Spleen (tissue), 13 donors: ENCODE measurements at regions of chr17 and their contacts with region 1.

Region 1: GRCh38 chr17:69123626-69124025 is 18.1 kb downstream of the ABCA6 start:
- DNase-seq: no peak
- H3K4me3 ChIP-seq: no peak overlapping the region
- H3K27ac ChIP-seq: no peak overlapping the region
- H3K4me1 ChIP-seq: peaks cover 0 to under 1% (median 0%) of the 10 kb centered on the region in 6 donors
- H3K27me3 ChIP-seq: no peaks in the 10 kb centered on the region
- CTCF ChIP-seq: no peak
- POLR2A ChIP-seq: no peak

Region 2: DNA sequence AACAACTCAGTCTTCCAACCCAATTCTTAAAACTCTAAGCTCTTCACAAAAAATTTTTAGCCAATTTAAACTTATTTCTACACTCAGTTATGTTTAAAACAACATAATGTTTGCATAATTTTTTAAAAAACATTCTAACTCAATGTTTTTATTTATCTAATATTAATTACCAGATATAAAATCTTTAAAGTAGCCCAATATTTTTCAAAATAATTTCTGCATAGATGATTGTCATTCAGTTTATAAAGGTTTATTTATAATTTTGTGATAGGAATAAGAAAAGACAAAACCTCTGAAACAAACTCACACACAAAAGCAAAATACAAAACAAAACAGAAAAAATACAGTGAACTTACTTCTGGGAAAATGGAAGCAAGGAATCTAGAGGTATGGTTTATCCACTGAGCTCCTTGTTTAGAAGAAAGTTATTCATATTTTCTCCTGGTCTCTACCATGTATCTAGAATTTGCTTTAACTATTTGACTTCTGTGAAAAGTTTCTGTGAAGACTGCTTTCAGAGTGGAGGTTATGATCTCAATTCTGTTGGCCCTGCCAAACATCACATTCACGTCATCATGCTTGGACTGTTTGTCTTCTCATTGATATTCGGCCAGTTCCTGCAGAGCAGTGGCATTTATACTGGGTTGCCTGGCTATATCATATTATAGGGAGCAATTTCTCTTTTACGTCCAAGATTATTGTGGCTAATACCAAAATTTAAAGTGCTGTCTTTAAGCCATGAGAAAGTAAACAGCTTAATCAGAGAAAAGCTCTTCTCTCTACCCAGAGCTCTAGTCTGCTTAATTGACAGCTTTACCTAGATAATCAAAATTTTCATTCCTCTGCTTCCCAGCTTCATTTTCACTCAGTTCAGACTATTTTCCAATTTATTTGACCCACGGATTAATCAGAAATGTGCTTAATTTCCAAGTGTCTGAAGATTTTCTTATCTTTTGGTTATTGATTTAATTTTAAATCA is 168.5 kb before region 1 on chr17 and contains the start of gene ABCA8:
- intact Hi-C with region 1: loop called (anchors 5 kb)
- DNase-seq: no peak
- H3K4me3 ChIP-seq: peak within 1 kb of the TSS in 5 of 8 donors; percentile 18 to 57 (median 33)
- H3K27ac ChIP-seq: peak within 1 kb of the TSS in 6 of 8 donors; percentile 16 to 62 (median 38)
- H3K4me1 ChIP-seq: peaks cover 0 to 3% (median 0%) of the 10 kb centered on the region in 6 donors
- H3K27me3 ChIP-seq: no peaks in the 10 kb centered on the region
- CTCF ChIP-seq: no peak
- POLR2A ChIP-seq: no peak
- total RNA-seq, gene ABCA8: 23.2 to 89.4 (median 66.6) TPM